Activated CD8-positive, alpha-beta T cell treated with anti-CD3 and anti-CD28 coated beads, Interleukin-2, amount 10 ng/mL, durations not matched to agents 7 days and 5 days (primary cell): ENCODE measurements at regions of chr5 and their contacts with region 1.

Region 1: GRCh38 chr5:317086-317811 is 4.3 kb upstream of the AHRR start:
- DNase-seq: peak; percentile 70
- ATAC-seq: peak; percentile 59
- H3K4me3 Mint-ChIP-seq: no peak overlapping the region
- H3K27ac Mint-ChIP-seq: peak overlapping the region; percentile 57
- H3K4me1 Mint-ChIP-seq: peaks cover 22% of the 10 kb centered on the region
- H3K27me3 Mint-ChIP-seq: peaks cover 2% of the 10 kb centered on the region

Region 2: GRCh38 chr5:285639-286557 is 31.4 kb before region 1 on chr5:
- CTCF ChIA-PET with region 1: interaction called, 11 read pairs
- POLR2A ChIA-PET with region 1: no interaction called
- DNase-seq: no peak
- ATAC-seq: no peak
- H3K4me3 Mint-ChIP-seq: no peak overlapping the region
- H3K27ac Mint-ChIP-seq: no peak overlapping the region
- H3K4me1 Mint-ChIP-seq: no peaks in the 10 kb centered on the region
- H3K27me3 Mint-ChIP-seq: no peaks in the 10 kb centered on the region

Region 3: DNA sequence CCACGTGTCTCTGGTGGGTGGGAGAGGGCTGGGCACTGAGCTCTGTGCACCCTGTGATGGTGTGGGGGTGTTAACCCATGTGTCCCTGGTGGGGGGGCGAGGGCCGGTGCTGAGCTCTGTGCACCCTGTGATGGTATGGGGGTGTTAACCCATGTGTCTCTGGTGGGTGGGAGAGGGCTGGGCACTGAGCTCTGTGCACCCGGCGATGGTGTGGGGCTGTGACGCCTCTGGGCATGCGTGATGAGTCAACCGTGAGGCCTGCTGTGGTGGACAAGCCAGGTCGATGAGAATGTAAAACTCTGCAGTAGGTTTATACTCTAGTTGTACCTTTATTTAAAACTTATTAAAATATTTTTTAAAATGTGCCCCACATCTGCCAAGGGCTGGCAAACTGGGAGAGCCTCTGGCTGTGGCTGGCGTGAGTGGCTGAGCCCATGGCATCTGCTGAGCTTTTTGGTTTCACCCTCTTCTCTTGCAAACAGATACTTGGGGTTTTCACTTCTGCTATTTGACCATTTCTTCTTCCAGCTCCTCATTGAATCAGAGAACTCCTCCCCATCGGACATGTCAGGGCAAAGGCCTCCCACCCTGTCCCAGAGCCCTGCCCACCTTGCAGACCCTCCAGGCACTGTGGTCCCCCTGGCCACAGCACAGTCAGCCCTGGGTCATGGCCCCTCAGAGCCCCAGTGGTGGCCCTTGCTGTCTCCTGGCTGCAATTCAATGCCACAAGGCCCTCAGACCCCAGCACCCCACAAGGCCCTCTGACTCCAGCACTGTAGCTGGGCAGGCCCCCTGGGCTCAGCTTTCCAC is 107.3 kb after region 1 on chr5:
- CTCF ChIA-PET with region 1: interaction called, 32 read pairs
- POLR2A ChIA-PET with region 1: no interaction called
- DNase-seq: no peak
- ATAC-seq: no peak
- H3K4me3 Mint-ChIP-seq: no peak overlapping the region
- H3K27ac Mint-ChIP-seq: peak overlapping the region; percentile 84
- H3K4me1 Mint-ChIP-seq: peaks cover 43% of the 10 kb centered on the region
- H3K27me3 Mint-ChIP-seq: no peaks in the 10 kb centered on the region

Region 4: DNA sequence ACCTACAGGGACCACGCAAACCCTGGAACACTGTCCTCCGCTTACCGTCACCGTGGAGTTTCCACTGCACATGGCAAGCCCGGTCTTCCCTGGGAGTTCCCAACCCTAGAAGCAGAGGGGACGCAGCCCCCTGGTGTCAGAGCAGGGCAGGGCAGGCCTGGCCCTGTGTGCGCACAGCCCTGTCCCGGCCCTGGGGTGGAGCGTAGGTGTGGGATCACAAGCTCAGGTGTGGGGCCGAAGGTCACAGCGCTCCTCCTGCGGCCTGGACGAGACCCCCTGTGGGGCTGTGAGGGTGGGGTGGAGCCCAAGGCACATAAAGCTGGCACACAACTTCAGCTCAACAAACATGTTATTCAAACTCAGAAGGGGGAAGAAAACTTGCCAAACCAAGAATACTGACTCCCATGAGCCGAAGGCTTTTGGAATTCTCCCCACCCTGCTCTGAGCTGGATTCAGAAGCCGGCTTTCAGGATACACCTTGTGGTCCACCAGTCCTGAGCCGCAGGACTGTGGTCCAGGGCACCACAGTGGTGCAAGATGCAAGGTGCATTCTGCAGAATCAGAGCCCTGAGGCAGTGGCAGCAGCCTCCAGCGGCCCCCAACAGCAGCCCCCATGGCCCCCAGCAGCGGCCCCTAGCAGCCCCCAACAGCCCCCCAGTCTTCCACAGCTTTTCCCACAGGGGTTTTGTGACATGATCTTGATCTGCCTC is 113.9 kb after region 1 on chr5:
- CTCF ChIA-PET with region 1: interaction called, 32 read pairs
- POLR2A ChIA-PET with region 1: no interaction called
- DNase-seq: peak; percentile 58
- ATAC-seq: peak; percentile 92
- H3K4me3 Mint-ChIP-seq: no peak overlapping the region
- H3K27ac Mint-ChIP-seq: peak overlapping the region; percentile 43
- H3K4me1 Mint-ChIP-seq: peaks cover 13% of the 10 kb centered on the region
- H3K27me3 Mint-ChIP-seq: no peaks in the 10 kb centered on the region

Region 5: DNA sequence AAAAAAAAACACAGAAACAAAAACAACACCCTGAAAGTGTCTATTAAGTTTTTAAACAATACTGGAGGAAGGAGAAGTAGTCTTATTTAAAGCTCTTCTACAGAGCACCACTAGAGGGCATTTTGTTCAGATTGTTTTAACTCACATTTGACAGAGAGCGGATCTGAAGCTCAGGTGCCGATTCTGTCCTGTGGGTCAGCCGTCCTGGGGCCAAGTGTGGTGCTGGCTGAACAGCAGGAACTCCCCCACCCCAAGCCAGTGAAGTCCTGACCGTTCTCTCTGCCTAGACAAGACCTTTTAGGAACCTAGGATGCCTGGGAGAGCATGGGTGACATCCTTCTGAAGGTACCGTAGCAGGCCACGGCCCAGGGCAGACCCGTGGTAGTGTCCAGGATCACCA is 129.6 kb after region 1 on chr5:
- CTCF ChIA-PET with region 1: interaction called, 21 read pairs
- POLR2A ChIA-PET with region 1: interaction called, 3 read pairs
- DNase-seq: no peak
- ATAC-seq: no peak
- H3K4me3 Mint-ChIP-seq: no peak overlapping the region
- H3K27ac Mint-ChIP-seq: no peak overlapping the region
- H3K4me1 Mint-ChIP-seq: peaks cover 43% of the 10 kb centered on the region
- H3K27me3 Mint-ChIP-seq: no peaks in the 10 kb centered on the region